ENCODE measurements at regions of chr7 and their contacts with region 1.

Region 1: GRCh38 chr7:150753826-150754603 is 16.8 kb downstream of the GIMAP5 start:
- DNase-seq: peak; percentile 54
- H3K4me3 Mint-ChIP-seq: peak overlapping the region; percentile 26
- H3K27ac Mint-ChIP-seq: peak overlapping the region; percentile 94
- H3K4me1 Mint-ChIP-seq: peaks cover 74% of the 10 kb centered on the region
- H3K27me3 Mint-ChIP-seq: no peaks in the 10 kb centered on the region

Region 2: GRCh38 chr7:150356265-150356897 is 397.6 kb before region 1 on chr7:
- CTCF ChIA-PET with region 1: interaction called, 3 read pairs
- POLR2A ChIA-PET with region 1: no interaction called
- intact Hi-C with region 1: loop called (anchors 2 kb)
- DNase-seq: no peak
- H3K4me3 Mint-ChIP-seq: no peak overlapping the region
- H3K27ac Mint-ChIP-seq: peak overlapping the region; percentile 33
- H3K4me1 Mint-ChIP-seq: peaks cover 36% of the 10 kb centered on the region
- H3K27me3 Mint-ChIP-seq: no peaks in the 10 kb centered on the region

Region 3: GRCh38 chr7:150448789-150449147 is 305.2 kb before region 1 on chr7:
- CTCF ChIA-PET with region 1: interaction called, 80 read pairs
- POLR2A ChIA-PET with region 1: interaction called, 15 read pairs
- intact Hi-C with region 1: loop called (anchors 1 kb)
- DNase-seq: peak; percentile 94
- H3K4me3 Mint-ChIP-seq: peak overlapping the region; percentile 97
- H3K27ac Mint-ChIP-seq: peak overlapping the region; percentile 98
- H3K4me1 Mint-ChIP-seq: peaks cover 48% of the 10 kb centered on the region
- H3K27me3 Mint-ChIP-seq: no peaks in the 10 kb centered on the region

Region 4: GRCh38 chr7:150567169-150567568 is 186.8 kb before region 1 on chr7 and contains the start of gene GIMAP4:
- CTCF ChIA-PET with region 1: interaction called, 6 read pairs
- POLR2A ChIA-PET with region 1: interaction called, 6 read pairs
- intact Hi-C with region 1: loop called (anchors 1 kb)
- DNase-seq: peak; percentile 55
- H3K4me3 Mint-ChIP-seq: peak within 1 kb of the TSS; percentile 94
- H3K27ac Mint-ChIP-seq: peak within 1 kb of the TSS; percentile 98
- H3K4me1 Mint-ChIP-seq: peaks cover 65% of the 10 kb centered on the region
- H3K27me3 Mint-ChIP-seq: no peaks in the 10 kb centered on the region
- total RNA-seq, gene GIMAP4: 128 to 140 TPM

Region 5: DNA sequence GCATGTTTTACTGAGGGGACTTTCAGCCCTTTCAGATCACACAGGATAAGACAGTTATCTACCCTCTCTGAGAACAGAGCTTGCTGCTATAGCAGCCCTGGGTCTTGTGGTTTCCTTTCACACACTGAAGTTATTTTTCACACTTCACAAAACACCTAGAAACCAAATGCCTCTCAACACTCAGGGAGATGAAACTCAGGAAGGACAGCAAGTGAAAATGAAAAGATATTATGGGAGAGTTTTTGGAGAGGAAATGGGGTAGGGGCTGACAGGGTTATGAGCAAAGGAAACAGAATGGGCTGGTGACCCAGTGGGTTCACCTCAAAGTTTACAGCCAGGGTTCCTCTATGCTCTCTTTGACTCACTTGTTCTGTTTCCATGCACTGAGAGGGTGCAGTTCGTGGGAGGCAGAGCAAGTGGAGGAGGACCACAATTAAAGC is 85.5 kb before region 1 on chr7:
- CTCF ChIA-PET with region 1: interaction called, 9 read pairs
- POLR2A ChIA-PET with region 1: interaction called, 12 read pairs
- intact Hi-C with region 1: loop called (anchors 1 kb)
- DNase-seq: peak; percentile 81
- H3K4me3 Mint-ChIP-seq: peak overlapping the region; percentile 18
- H3K27ac Mint-ChIP-seq: peak overlapping the region; percentile 98
- H3K4me1 Mint-ChIP-seq: peaks cover 82% of the 10 kb centered on the region
- H3K27me3 Mint-ChIP-seq: no peaks in the 10 kb centered on the region

Measured in activated CD4-positive, alpha-beta memory T cell treated with anti-CD3 and anti-CD28 coated beads for 36 hours (primary cell).